ENCODE measurements at regions of chr4 and their contacts with region 1.

Region 1: GRCh38 chr4:6134612-6135220 is 65.6 kb downstream of the JAKMIP1 start:
- DNase-seq: peak in 1 of 9 donors; percentile 11
- ATAC-seq: peak; percentile 86
- H3K4me3 ChIP-seq: no peak overlapping the region
- H3K4me3 Mint-ChIP-seq: no peak overlapping the region
- H3K27ac ChIP-seq: no peak overlapping the region
- H3K27ac Mint-ChIP-seq: no peak overlapping the region
- H3K4me1 ChIP-seq: peaks cover 0 to 5% of the 10 kb centered on the region in 2 donors
- H3K4me1 Mint-ChIP-seq: peaks cover 0 to 11% (median 0%) of the 10 kb centered on the region in 7 donors
- H3K27me3 ChIP-seq: no peaks in the 10 kb centered on the region
- H3K27me3 Mint-ChIP-seq: peaks cover 0 to 9% (median 7%) of the 10 kb centered on the region in 5 donors

Region 2: GRCh38 chr4:6191448-6192130 is 56.9 kb after region 1 on chr4:
- CTCF ChIA-PET with region 1: no interaction called
- POLR2A ChIA-PET with region 1: no interaction called
- intact Hi-C with region 1: loop called in 1 of 2 experiments (anchors 1 kb)
- DNase-seq: no peak
- ATAC-seq: no peak
- H3K4me3 ChIP-seq: no peak overlapping the region
- H3K4me3 Mint-ChIP-seq: no peak overlapping the region
- H3K27ac ChIP-seq: no peak overlapping the region
- H3K27ac Mint-ChIP-seq: peak overlapping the region in 1 of 9 donors; percentile 33
- H3K4me1 ChIP-seq: no peaks in the 10 kb centered on the region
- H3K4me1 Mint-ChIP-seq: peaks cover 0 to 33% (median 0%) of the 10 kb centered on the region in 7 donors
- H3K27me3 ChIP-seq: no peaks in the 10 kb centered on the region
- H3K27me3 Mint-ChIP-seq: peaks cover 0 to 49% (median 30%) of the 10 kb centered on the region in 5 donors